B cell (primary cell): ENCODE measurements at regions of chr6 and their contacts with region 1.

Region 1: GRCh38 chr6:99425647-99426453 is 742 bp upstream of the PNISR start:
- DNase-seq: no peak
- ATAC-seq: peak; percentile 50
- H3K4me3 ChIP-seq: peak overlapping the region; percentile 75 to 100 (median 99)
- H3K4me3 Mint-ChIP-seq: peak overlapping the region; percentile 99
- H3K27ac ChIP-seq: peak overlapping the region; percentile 97 to 100
- H3K27ac Mint-ChIP-seq: peak overlapping the region; percentile 100
- H3K4me1 ChIP-seq: peaks cover 42 to 43% of the 10 kb centered on the region in 2 donors
- H3K4me1 Mint-ChIP-seq: peaks cover 54% of the 10 kb centered on the region
- H3K27me3 ChIP-seq: no peaks in the 10 kb centered on the region
- H3K27me3 Mint-ChIP-seq: no peaks in the 10 kb centered on the region
- CTCF ChIP-seq: peak; percentile 5

Region 2: GRCh38 chr6:99330159-99330558 is 95.7 kb before region 1 on chr6:
- CTCF ChIA-PET with region 1: interaction called, 12 read pairs
- POLR2A ChIA-PET with region 1: no interaction called
- intact Hi-C with region 1: loop called (anchors 2 kb)
- DNase-seq: peak; percentile 72
- ATAC-seq: peak; percentile 76
- H3K4me3 ChIP-seq: no peak overlapping the region
- H3K4me3 Mint-ChIP-seq: no peak overlapping the region
- H3K27ac ChIP-seq: no peak overlapping the region
- H3K27ac Mint-ChIP-seq: no peak overlapping the region
- H3K4me1 ChIP-seq: peaks cover 0 to 3% of the 10 kb centered on the region in 2 donors
- H3K4me1 Mint-ChIP-seq: peaks cover 12% of the 10 kb centered on the region
- H3K27me3 ChIP-seq: peaks cover 0 to 2% (median 1%) of the 10 kb centered on the region in 4 experiments
- H3K27me3 Mint-ChIP-seq: no peaks in the 10 kb centered on the region
- CTCF ChIP-seq: peak; percentile 89

Region 3: GRCh38 chr6:99393698-99394531 is 31.9 kb before region 1 on chr6 and contains the start of gene COQ3:
- CTCF ChIA-PET with region 1: interaction called, 8 read pairs
- POLR2A ChIA-PET with region 1: interaction called, 7 read pairs
- intact Hi-C with region 1: loop called (anchors 1 kb)
- DNase-seq: peak; percentile 80
- ATAC-seq: peak; percentile 80
- H3K4me3 ChIP-seq: peak within 1 kb of the TSS; percentile 57 to 94 (median 81)
- H3K4me3 Mint-ChIP-seq: peak within 1 kb of the TSS; percentile 95
- H3K27ac ChIP-seq: peak within 1 kb of the TSS; percentile 49 to 74
- H3K27ac Mint-ChIP-seq: peak within 1 kb of the TSS; percentile 89
- H3K4me1 ChIP-seq: peaks cover 5 to 12% of the 10 kb centered on the region in 2 donors
- H3K4me1 Mint-ChIP-seq: peaks cover 15% of the 10 kb centered on the region
- H3K27me3 ChIP-seq: no peaks in the 10 kb centered on the region
- H3K27me3 Mint-ChIP-seq: no peaks in the 10 kb centered on the region
- CTCF ChIP-seq: no peak
- total RNA-seq, gene COQ3: 3.1 and 3.9 TPM in 2 replicates

Region 4: GRCh38 chr6:99485395-99485773 is 59.5 kb after region 1 on chr6:
- CTCF ChIA-PET with region 1: interaction called, 3 read pairs
- POLR2A ChIA-PET with region 1: no interaction called
- intact Hi-C with region 1: loop called (anchors 2 kb)
- DNase-seq: peak; percentile 45
- ATAC-seq: no peak
- H3K4me3 ChIP-seq: peak overlapping the region in 3 of 5 experiments; percentile 10 to 26 (median 26)
- H3K4me3 Mint-ChIP-seq: peak overlapping the region; percentile 71
- H3K27ac ChIP-seq: peak overlapping the region; percentile 77 to 78
- H3K27ac Mint-ChIP-seq: peak overlapping the region; percentile 90
- H3K4me1 ChIP-seq: peaks cover 20 to 26% of the 10 kb centered on the region in 2 donors
- H3K4me1 Mint-ChIP-seq: peaks cover 27% of the 10 kb centered on the region
- H3K27me3 ChIP-seq: no peaks in the 10 kb centered on the region
- H3K27me3 Mint-ChIP-seq: no peaks in the 10 kb centered on the region
- CTCF ChIP-seq: no peak

Region 5: DNA sequence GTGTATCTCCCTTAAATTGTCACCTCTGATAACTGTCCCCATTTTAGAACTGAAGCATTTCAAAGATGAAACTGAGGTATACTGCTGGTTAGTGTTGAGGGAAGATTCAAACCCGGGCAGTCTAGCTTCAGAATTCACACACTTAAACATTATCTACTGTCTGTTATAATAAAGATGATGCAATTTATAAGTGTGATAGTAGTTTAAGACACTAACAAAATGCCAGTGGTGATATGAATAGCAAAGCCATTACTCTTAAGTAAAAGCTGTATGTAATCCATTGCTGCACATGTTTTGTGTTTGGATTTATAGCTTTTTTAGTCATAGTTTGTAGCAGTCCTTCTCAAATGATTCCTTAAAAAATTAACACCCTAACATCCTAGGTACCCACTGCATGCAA is 69.6 kb after region 1 on chr6:
- CTCF ChIA-PET with region 1: no interaction called
- POLR2A ChIA-PET with region 1: no interaction called
- intact Hi-C with region 1: no loop called
- DNase-seq: no peak
- ATAC-seq: no peak
- H3K4me3 ChIP-seq: no peak overlapping the region
- H3K4me3 Mint-ChIP-seq: no peak overlapping the region
- H3K27ac ChIP-seq: no peak overlapping the region
- H3K27ac Mint-ChIP-seq: no peak overlapping the region
- H3K4me1 ChIP-seq: peaks cover 7 to 10% of the 10 kb centered on the region in 2 donors
- H3K4me1 Mint-ChIP-seq: peaks cover 14% of the 10 kb centered on the region
- H3K27me3 ChIP-seq: no peaks in the 10 kb centered on the region
- H3K27me3 Mint-ChIP-seq: no peaks in the 10 kb centered on the region
- CTCF ChIP-seq: no peak

Region 6: DNA sequence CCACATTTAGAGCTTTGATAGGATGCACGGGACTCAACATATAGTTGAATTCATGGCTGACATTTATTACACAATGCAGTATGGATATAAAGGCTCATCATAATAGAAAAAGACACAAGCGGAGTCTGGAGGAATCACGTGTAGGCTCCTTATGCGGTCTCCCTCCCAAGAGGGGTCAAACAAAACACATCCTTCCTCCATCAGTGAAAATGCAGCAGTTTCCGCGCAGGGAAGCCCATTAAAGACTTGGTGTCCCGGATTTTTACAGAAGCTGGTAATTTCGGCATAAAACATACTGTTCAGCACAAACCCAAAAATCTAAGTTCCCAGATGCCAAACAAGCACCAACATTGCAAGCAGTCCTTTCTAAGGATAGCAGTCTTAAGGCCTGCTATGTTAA is 88.2 kb after region 1 on chr6:
- CTCF ChIA-PET with region 1: interaction called, 3 read pairs
- POLR2A ChIA-PET with region 1: no interaction called
- intact Hi-C with region 1: loop called (anchors 1 kb)
- DNase-seq: peak; percentile 13
- ATAC-seq: no peak
- H3K4me3 ChIP-seq: no peak overlapping the region
- H3K4me3 Mint-ChIP-seq: peak overlapping the region; percentile 86
- H3K27ac ChIP-seq: peak overlapping the region in 1 of 2 donors; percentile 85
- H3K27ac Mint-ChIP-seq: peak overlapping the region; percentile 97
- H3K4me1 ChIP-seq: peaks cover 14 to 15% of the 10 kb centered on the region in 2 donors
- H3K4me1 Mint-ChIP-seq: peaks cover 34% of the 10 kb centered on the region
- H3K27me3 ChIP-seq: no peaks in the 10 kb centered on the region
- H3K27me3 Mint-ChIP-seq: no peaks in the 10 kb centered on the region
- CTCF ChIP-seq: no peak

Region 7: GRCh38 chr6:99568103-99568933 is 142.5 kb after region 1 on chr6 and contains the start of gene CCNC:
- CTCF ChIA-PET with region 1: interaction called, 5 read pairs
- POLR2A ChIA-PET with region 1: interaction called, 5 read pairs
- intact Hi-C with region 1: loop called (anchors 1 kb)
- DNase-seq: peak; percentile 93
- ATAC-seq: peak; percentile 96
- H3K4me3 ChIP-seq: peak within 1 kb of the TSS; percentile 53 to 97 (median 90)
- H3K4me3 Mint-ChIP-seq: peak within 1 kb of the TSS; percentile 95
- H3K27ac ChIP-seq: peak within 1 kb of the TSS; percentile 78 to 87
- H3K27ac Mint-ChIP-seq: peak within 1 kb of the TSS; percentile 93
- H3K4me1 ChIP-seq: peaks cover 10 to 14% of the 10 kb centered on the region in 2 donors
- H3K4me1 Mint-ChIP-seq: peaks cover 31% of the 10 kb centered on the region
- H3K27me3 ChIP-seq: no peaks in the 10 kb centered on the region
- H3K27me3 Mint-ChIP-seq: no peaks in the 10 kb centered on the region
- CTCF ChIP-seq: no peak
- total RNA-seq, gene CCNC: 45.1 and 47.9 TPM in 2 replicates

Region 8: DNA sequence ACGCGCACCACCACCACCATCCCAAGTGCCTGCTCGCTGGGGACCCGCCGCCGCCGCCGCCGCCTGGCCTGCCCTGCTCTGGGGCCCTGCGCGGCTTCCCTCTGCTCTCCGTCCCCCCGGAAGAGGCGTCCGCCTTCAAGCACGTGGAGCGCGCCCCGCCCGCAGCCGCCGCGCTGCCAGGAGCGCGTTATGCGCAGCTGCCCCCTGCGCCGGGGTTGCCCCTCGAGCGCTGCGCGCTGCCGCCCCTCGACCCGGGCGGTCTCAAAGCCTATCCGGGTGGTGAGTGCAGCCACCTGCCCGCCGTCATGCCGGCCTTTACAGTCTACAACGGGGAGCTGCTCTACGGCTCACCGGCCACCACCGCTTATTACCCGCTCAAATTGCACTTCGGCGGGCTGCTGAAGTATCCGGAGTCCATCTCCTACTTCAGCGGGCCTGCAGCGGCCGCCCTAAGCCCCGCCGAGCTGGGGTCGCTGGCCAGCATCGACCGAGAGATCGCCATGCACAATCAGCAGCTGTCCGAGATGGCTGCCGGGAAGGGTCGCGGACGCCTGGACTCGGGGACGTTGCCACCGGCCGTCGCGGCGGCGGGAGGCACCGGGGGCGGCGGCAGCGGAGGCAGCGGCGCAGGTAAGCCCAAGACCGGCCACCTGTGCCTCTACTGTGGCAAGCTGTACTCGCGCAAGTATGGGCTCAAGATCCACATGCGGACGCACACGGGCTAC is 188.0 kb after region 1 on chr6:
- CTCF ChIA-PET with region 1: no interaction called
- POLR2A ChIA-PET with region 1: no interaction called
- intact Hi-C with region 1: no loop called
- DNase-seq: peak; percentile 67
- ATAC-seq: peak; percentile 67
- H3K4me3 ChIP-seq: peak overlapping the region in 4 of 5 experiments; percentile 34 to 68 (median 52)
- H3K4me3 Mint-ChIP-seq: peak overlapping the region; percentile 86
- H3K27ac ChIP-seq: no peak overlapping the region
- H3K27ac Mint-ChIP-seq: no peak overlapping the region
- H3K4me1 ChIP-seq: peaks cover 21 to 32% of the 10 kb centered on the region in 2 donors
- H3K4me1 Mint-ChIP-seq: peaks cover 9% of the 10 kb centered on the region
- H3K27me3 ChIP-seq: peaks cover 0 to 80% (median 71%) of the 10 kb centered on the region in 4 experiments
- H3K27me3 Mint-ChIP-seq: peaks cover 72% of the 10 kb centered on the region
- CTCF ChIP-seq: peak; percentile 21

Region 9: GRCh38 chr6:99761711-99762110 is 335.9 kb after region 1 on chr6:
- CTCF ChIA-PET with region 1: no interaction called
- POLR2A ChIA-PET with region 1: no interaction called
- intact Hi-C with region 1: no loop called
- DNase-seq: no peak
- ATAC-seq: no peak
- H3K4me3 ChIP-seq: no peak overlapping the region
- H3K4me3 Mint-ChIP-seq: no peak overlapping the region
- H3K27ac ChIP-seq: no peak overlapping the region
- H3K27ac Mint-ChIP-seq: no peak overlapping the region
- H3K4me1 ChIP-seq: no peaks in the 10 kb centered on the region
- H3K4me1 Mint-ChIP-seq: no peaks in the 10 kb centered on the region
- H3K27me3 ChIP-seq: peaks cover 0 to 2% (median 0%) of the 10 kb centered on the region in 4 experiments
- H3K27me3 Mint-ChIP-seq: peaks cover 10% of the 10 kb centered on the region
- CTCF ChIP-seq: no peak